ENCODE measurements at regions of chr2 and their contacts with region 1.

Region 1: GRCh38 chr2:8761529-8762164 is 75.8 kb downstream of the KIDINS220 start:
- DNase-seq: no peak
- ATAC-seq: no peak
- H3K4me3 Mint-ChIP-seq: no peak overlapping the region
- H3K27ac Mint-ChIP-seq: no peak overlapping the region
- H3K4me1 Mint-ChIP-seq: no peaks in the 10 kb centered on the region
- H3K27me3 Mint-ChIP-seq: no peaks in the 10 kb centered on the region

Region 2: GRCh38 chr2:7203055-7203467 is 1558.6 kb before region 1 on chr2:
- CTCF ChIA-PET with region 1: no interaction called
- POLR2A ChIA-PET with region 1: no interaction called
- intact Hi-C with region 1: loop called in 1 of 2 experiments (anchors 10 kb)
- DNase-seq: peak; percentile 78
- ATAC-seq: peak; percentile 55
- H3K4me3 Mint-ChIP-seq: no peak overlapping the region
- H3K27ac Mint-ChIP-seq: no peak overlapping the region
- H3K4me1 Mint-ChIP-seq: peaks cover 1% of the 10 kb centered on the region
- H3K27me3 Mint-ChIP-seq: no peaks in the 10 kb centered on the region

Region 3: GRCh38 chr2:8693155-8693821 is 68.4 kb before region 1 on chr2:
- CTCF ChIA-PET with region 1: interaction called, 3 read pairs
- POLR2A ChIA-PET with region 1: no interaction called
- intact Hi-C with region 1: loop called (anchors 1 to 2 kb)
- DNase-seq: peak; percentile 75
- ATAC-seq: peak; percentile 84
- H3K4me3 Mint-ChIP-seq: no peak overlapping the region
- H3K27ac Mint-ChIP-seq: no peak overlapping the region
- H3K4me1 Mint-ChIP-seq: no peaks in the 10 kb centered on the region
- H3K27me3 Mint-ChIP-seq: peaks cover 21% of the 10 kb centered on the region